B cell (primary cell): ENCODE measurements at regions of chr1 and their contacts with region 1.

Region 1: DNA sequence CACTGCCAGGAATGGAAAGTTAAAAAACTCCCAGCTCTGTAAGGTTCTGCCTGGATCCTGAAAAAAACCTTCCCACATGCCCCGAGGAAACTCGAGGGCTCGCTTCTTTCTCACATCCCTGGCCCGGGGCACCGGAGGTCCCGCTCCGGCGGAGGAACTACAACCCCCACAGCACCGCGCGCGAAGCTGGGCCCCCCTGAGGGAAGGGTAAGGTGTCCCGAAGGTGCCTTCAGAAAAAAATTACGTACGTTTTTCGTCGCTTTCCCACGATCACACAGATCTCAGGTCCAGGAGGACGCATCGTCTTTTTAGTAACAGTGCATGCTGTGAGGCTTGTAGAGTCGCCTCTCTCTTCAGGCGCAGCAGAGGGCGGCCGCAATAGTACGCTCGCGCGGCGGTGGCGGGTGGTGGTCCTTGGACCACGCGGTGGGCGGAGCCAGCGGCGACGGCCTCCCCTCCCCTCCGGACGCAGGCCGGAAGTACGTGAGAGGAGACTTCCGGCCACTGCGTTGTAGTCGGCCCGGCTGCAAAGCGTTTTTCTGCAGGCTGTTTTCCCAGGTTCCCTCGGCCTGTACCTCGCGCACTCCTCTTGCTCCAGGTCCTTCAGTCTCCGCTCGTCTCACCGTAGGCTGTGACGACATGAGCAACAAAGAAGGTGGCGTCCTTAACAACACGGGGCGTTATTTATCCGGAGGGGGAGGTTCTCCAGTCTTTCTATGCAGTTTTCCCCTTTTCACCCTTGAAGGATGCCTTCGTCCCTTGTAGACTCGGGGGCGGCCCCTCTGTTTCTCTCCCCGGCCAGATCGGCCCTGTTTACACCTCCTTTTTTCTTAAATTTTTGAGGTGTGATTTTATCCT is at the start of gene TSNAX:
- DNase-seq: peak; percentile 98
- ATAC-seq: peak; percentile 94
- H3K4me3 ChIP-seq: peak within 1 kb of the TSS; percentile 71 to 94 (median 91)
- H3K4me3 Mint-ChIP-seq: peak within 1 kb of the TSS; percentile 99
- H3K27ac ChIP-seq: peak within 1 kb of the TSS; percentile 90 to 99
- H3K27ac Mint-ChIP-seq: peak within 1 kb of the TSS; percentile 100
- H3K4me1 ChIP-seq: peaks cover 21 to 24% of the 10 kb centered on the region in 2 donors
- H3K4me1 Mint-ChIP-seq: peaks cover 32% of the 10 kb centered on the region
- H3K27me3 ChIP-seq: no peaks in the 10 kb centered on the region
- H3K27me3 Mint-ChIP-seq: no peaks in the 10 kb centered on the region
- CTCF ChIP-seq: no peak
- total RNA-seq, gene TSNAX: 34.8 and 41.4 TPM in 2 replicates

Region 2: GRCh38 chr1:231240883-231241735 is 287.3 kb before region 1 on chr1 and contains the start of gene GNPAT:
- CTCF ChIA-PET with region 1: no interaction called
- POLR2A ChIA-PET with region 1: no interaction called
- intact Hi-C with region 1: loop called (anchors 2 kb)
- DNase-seq: peak; percentile 93
- ATAC-seq: peak; percentile 96
- H3K4me3 ChIP-seq: peak within 1 kb of the TSS; percentile 78 to 92 (median 88)
- H3K4me3 Mint-ChIP-seq: peak within 1 kb of the TSS; percentile 96
- H3K27ac ChIP-seq: peak within 1 kb of the TSS; percentile 76 to 87
- H3K27ac Mint-ChIP-seq: peak within 1 kb of the TSS; percentile 95
- H3K4me1 ChIP-seq: peaks cover 23 to 29% of the 10 kb centered on the region in 2 donors
- H3K4me1 Mint-ChIP-seq: peaks cover 68% of the 10 kb centered on the region
- H3K27me3 ChIP-seq: no peaks in the 10 kb centered on the region
- H3K27me3 Mint-ChIP-seq: no peaks in the 10 kb centered on the region
- CTCF ChIP-seq: no peak
- total RNA-seq, gene GNPAT: 48.0 and 49.0 TPM in 2 replicates

Region 3: DNA sequence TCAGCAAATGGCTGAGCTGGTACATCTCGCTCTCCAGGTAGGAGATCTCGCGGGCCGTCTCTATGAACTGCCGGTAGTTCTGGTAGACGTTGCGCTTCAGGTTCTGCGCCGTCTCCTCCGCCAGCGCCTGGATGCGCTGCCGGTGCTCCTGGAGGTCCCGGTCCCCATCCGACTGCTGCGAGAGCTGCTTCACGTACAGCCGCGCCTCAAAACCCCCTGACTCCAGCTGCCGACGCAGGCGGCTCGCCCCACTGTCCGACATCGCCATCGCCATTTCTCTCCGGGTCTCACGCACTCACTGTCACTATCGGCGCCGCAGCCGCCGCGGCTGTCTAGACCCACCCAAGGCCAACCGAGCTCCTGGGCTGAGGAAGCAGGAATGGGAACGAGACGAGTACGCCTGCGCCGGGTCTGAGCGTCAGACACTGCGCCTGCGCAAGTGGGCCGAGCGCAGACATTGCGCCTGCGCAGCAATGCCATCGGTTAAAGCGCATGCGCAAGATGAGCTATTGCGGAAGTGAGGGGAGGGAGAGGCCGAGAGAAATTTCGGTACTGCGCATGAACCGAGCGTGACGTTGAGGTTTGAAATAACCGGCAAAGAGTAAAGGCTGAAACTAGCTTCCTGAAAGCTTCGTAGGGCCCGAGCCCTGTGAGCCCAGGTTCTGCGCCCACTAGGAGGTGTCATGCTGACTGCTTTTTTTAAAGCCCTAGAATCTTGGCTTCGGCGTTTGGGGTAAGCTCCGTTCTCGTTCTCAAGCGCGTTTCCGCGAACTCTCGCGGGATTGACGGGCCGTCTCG is 190.7 kb before region 1 on chr1 and contains the start of gene EXOC8:
- CTCF ChIA-PET with region 1: interaction called, 4 read pairs
- POLR2A ChIA-PET with region 1: interaction called, 3 read pairs
- intact Hi-C with region 1: loop called (anchors 1 kb)
- DNase-seq: peak; percentile 99
- ATAC-seq: peak; percentile 83
- H3K4me3 ChIP-seq: peak within 1 kb of the TSS; percentile 68 to 96 (median 94)
- H3K4me3 Mint-ChIP-seq: peak within 1 kb of the TSS; percentile 99
- H3K27ac ChIP-seq: peak within 1 kb of the TSS; percentile 93 to 99
- H3K27ac Mint-ChIP-seq: peak within 1 kb of the TSS; percentile 100
- H3K4me1 ChIP-seq: peaks cover 46 to 54% of the 10 kb centered on the region in 2 donors
- H3K4me1 Mint-ChIP-seq: peaks cover 59% of the 10 kb centered on the region
- H3K27me3 ChIP-seq: no peaks in the 10 kb centered on the region
- H3K27me3 Mint-ChIP-seq: peaks cover 3% of the 10 kb centered on the region
- CTCF ChIP-seq: no peak
- total RNA-seq, gene EXOC8: 32.5 and 32.6 TPM in 2 replicates

Region 4: GRCh38 chr1:231557898-231558707 is 29.7 kb after region 1 on chr1:
- CTCF ChIA-PET with region 1: no interaction called
- POLR2A ChIA-PET with region 1: no interaction called
- intact Hi-C with region 1: no loop called
- DNase-seq: no peak
- ATAC-seq: no peak
- H3K4me3 ChIP-seq: no peak overlapping the region
- H3K4me3 Mint-ChIP-seq: no peak overlapping the region
- H3K27ac ChIP-seq: no peak overlapping the region
- H3K27ac Mint-ChIP-seq: no peak overlapping the region
- H3K4me1 ChIP-seq: no peaks in the 10 kb centered on the region
- H3K4me1 Mint-ChIP-seq: no peaks in the 10 kb centered on the region
- H3K27me3 ChIP-seq: no peaks in the 10 kb centered on the region
- H3K27me3 Mint-ChIP-seq: no peaks in the 10 kb centered on the region
- CTCF ChIP-seq: no peak

Region 5: GRCh38 chr1:231612393-231613089 is 84.1 kb after region 1 on chr1:
- CTCF ChIA-PET with region 1: no interaction called
- POLR2A ChIA-PET with region 1: no interaction called
- intact Hi-C with region 1: loop called (anchors 1 kb)
- DNase-seq: peak; percentile 84
- ATAC-seq: peak; percentile 95
- H3K4me3 ChIP-seq: peak overlapping the region in 4 of 5 experiments; percentile 26 to 59 (median 50)
- H3K4me3 Mint-ChIP-seq: peak overlapping the region; percentile 56
- H3K27ac ChIP-seq: peak overlapping the region; percentile 8 to 47
- H3K27ac Mint-ChIP-seq: peak overlapping the region; percentile 74
- H3K4me1 ChIP-seq: peaks cover 58 to 61% of the 10 kb centered on the region in 2 donors
- H3K4me1 Mint-ChIP-seq: peaks cover 63% of the 10 kb centered on the region
- H3K27me3 ChIP-seq: peaks cover 0 to 3% (median 0%) of the 10 kb centered on the region in 4 experiments
- H3K27me3 Mint-ChIP-seq: peaks cover 8% of the 10 kb centered on the region
- CTCF ChIP-seq: no peak

Region 6: DNA sequence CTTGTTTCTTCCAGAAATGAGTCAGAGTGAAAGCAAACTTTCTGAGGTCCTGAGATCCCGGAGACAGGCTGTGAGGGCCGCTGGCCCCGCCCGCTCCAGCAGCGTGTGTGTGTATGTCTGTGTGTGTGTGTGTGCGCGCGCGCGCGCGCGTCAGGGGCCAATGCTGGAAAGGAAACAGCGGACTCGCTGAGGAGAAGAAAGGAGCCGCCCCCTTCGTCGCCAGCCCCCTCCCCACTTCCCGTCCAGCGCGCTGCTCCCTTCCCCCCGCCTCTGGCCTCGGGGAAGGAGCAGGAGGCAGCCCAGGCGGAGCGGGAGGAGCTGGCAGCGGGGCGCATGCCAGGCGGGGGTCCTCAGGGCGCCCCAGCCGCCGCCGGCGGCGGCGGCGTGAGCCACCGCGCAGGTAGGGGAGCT is 98.1 kb after region 1 on chr1 and contains the start of gene DISC1:
- CTCF ChIA-PET with region 1: no interaction called
- POLR2A ChIA-PET with region 1: interaction called, 5 read pairs
- intact Hi-C with region 1: loop called (anchors 5 kb)
- DNase-seq: peak; percentile 75
- ATAC-seq: peak; percentile 71
- H3K4me3 ChIP-seq: peak within 1 kb of the TSS; percentile 57 to 83 (median 66)
- H3K4me3 Mint-ChIP-seq: peak within 1 kb of the TSS; percentile 96
- H3K27ac ChIP-seq: no peak within 1 kb of the TSS
- H3K27ac Mint-ChIP-seq: peak within 1 kb of the TSS; percentile 88
- H3K4me1 ChIP-seq: peaks cover 18 to 19% of the 10 kb centered on the region in 2 donors
- H3K4me1 Mint-ChIP-seq: peaks cover 25% of the 10 kb centered on the region
- H3K27me3 ChIP-seq: peaks cover 0 to 19% (median 12%) of the 10 kb centered on the region in 4 experiments
- H3K27me3 Mint-ChIP-seq: peaks cover 25% of the 10 kb centered on the region
- CTCF ChIP-seq: no peak
- total RNA-seq, gene DISC1: 3.3 and 4.3 TPM in 2 replicates